H1 (cell line): ENCODE measurements at regions of chr7 and their contacts with region 1.

Region 1: DNA sequence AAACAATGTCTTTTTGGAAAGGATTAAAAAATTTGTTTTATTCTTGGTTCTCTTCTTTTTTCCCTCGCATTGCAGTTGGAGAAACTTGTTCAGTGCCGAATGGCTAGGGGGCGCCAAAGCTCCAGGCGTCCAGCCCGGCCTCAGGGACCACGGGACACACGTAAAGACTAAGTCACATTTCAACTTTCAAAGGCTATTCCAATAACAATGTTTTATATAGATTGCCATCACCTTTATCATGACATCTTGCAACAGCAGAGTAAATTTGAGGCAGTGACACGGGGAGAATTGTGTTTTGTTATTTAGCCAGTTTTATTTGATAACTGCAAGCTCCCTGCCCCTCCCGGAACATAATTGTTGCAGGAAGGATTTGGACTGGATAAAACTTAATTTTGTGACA is 2.2 kb upstream of the IGFBP3 start:
- DNase-seq: peak in 1 of 2 experiments; percentile 88
- H3K4me3 ChIP-seq: peak overlapping the region in 2 of 4 experiments; percentile 17 to 67; a peak in 5 of 8 replicates
- H3K27ac ChIP-seq: no peak overlapping the region
- H3K4me1 ChIP-seq: peaks cover 6 to 26% (median 12%) of the 10 kb centered on the region in 4 experiments; a peak in 6 of 7 replicates
- H3K27me3 ChIP-seq: peaks cover 14 to 41% (median 33%) of the 10 kb centered on the region in 4 experiments
- CTCF ChIP-seq: peak; percentile 74 to 86 (median 85)
- EP300 ChIP-seq: no peak
- POLR2A ChIP-seq: no peak
- RAD21 ChIP-seq: peak; percentile 93 to 94

Region 2: DNA sequence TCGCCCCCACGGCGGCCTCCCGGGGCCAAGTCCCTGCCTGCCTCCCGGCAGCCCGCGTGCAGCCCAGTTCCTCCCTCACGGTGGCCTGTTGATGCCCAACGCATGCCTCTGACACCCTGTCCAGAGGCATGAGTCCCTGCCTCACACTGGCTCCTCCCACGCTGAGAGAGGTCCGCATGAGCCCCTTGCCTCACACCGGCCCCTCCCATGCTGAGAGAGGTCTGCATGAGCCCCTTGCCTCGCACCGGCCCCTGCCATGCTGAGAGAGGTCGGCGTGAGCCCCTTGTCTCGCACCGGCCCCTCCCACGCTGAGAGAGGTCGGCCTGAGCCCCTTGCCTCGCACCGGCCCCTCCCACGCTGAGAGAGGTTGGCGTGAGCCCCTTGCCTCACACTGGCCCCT is 110.3 kb before region 1 on chr7:
- CTCF ChIA-PET with region 1: no interaction called
- POLR2A ChIA-PET with region 1: no interaction called
- DNase-seq: no peak
- H3K4me3 ChIP-seq: no peak overlapping the region
- H3K27ac ChIP-seq: no peak overlapping the region
- H3K4me1 ChIP-seq: no peaks in the 10 kb centered on the region
- H3K27me3 ChIP-seq: no peaks in the 10 kb centered on the region
- CTCF ChIP-seq: no peak
- EP300 ChIP-seq: no peak
- POLR2A ChIP-seq: no peak
- RAD21 ChIP-seq: no peak

Region 3: DNA sequence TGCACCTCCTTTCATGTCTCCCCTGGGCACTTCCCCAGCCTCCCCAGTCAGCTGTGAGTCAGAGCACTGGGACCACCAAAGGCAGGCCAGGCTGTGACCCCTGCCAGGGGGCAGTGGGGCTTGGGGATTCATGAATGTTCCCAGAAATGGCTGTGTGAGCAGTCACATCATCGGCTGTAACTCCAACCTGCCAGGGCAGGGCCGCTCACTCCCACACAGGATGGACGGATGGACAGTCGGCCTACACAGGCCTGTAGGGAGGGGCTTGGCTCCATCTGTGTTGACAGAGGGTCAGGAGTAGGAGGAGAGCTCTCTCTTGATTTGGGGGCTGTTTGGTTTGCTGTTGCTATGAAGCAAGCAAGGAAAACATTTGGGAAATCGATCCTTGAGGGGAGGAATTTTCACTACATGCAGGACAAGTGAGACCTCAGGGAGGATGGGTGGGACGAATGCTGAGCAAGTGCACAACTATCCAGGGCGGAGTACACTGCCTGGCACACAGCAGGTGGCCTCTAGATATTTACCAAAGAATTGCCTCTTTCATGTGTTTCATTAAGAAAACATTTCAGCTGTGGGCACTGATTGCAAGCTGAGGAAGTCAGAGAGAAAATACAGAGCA is 37.9 kb before region 1 on chr7:
- CTCF ChIA-PET with region 1: interaction called, 22 read pairs
- POLR2A ChIA-PET with region 1: interaction called, 5 read pairs
- DNase-seq: no peak
- H3K4me3 ChIP-seq: no peak overlapping the region
- H3K27ac ChIP-seq: no peak overlapping the region
- H3K4me1 ChIP-seq: peaks cover 3 to 15% (median 10%) of the 10 kb centered on the region in 4 experiments
- H3K27me3 ChIP-seq: peaks cover 21 to 36% (median 33%) of the 10 kb centered on the region in 4 experiments
- CTCF ChIP-seq: no peak
- EP300 ChIP-seq: no peak
- POLR2A ChIP-seq: no peak
- RAD21 ChIP-seq: no peak

Region 4: GRCh38 chr7:45978010-45978681 is 54.9 kb after region 1 on chr7:
- CTCF ChIA-PET with region 1: interaction called, 15 read pairs
- POLR2A ChIA-PET with region 1: interaction called, 3 read pairs
- DNase-seq: peak in 1 of 2 experiments; percentile 41
- H3K4me3 ChIP-seq: no peak overlapping the region
- H3K27ac ChIP-seq: no peak overlapping the region
- H3K4me1 ChIP-seq: peaks cover 0 to 7% (median 6%) of the 10 kb centered on the region in 4 experiments; a peak in 5 of 7 replicates
- H3K27me3 ChIP-seq: no peaks in the 10 kb centered on the region
- CTCF ChIP-seq: no peak
- EP300 ChIP-seq: no peak
- POLR2A ChIP-seq: no peak
- RAD21 ChIP-seq: no peak

Region 5: GRCh38 chr7:46139079-46139478 is 215.8 kb after region 1 on chr7:
- CTCF ChIA-PET with region 1: interaction called, 20 read pairs
- POLR2A ChIA-PET with region 1: no interaction called
- DNase-seq: no peak
- H3K4me3 ChIP-seq: no peak overlapping the region
- H3K27ac ChIP-seq: no peak overlapping the region
- H3K4me1 ChIP-seq: no peaks in the 10 kb centered on the region
- H3K27me3 ChIP-seq: no peaks in the 10 kb centered on the region
- CTCF ChIP-seq: no peak
- EP300 ChIP-seq: no peak
- POLR2A ChIP-seq: no peak
- RAD21 ChIP-seq: no peak

Region 6: GRCh38 chr7:46168671-46169383 is 245.5 kb after region 1 on chr7:
- CTCF ChIA-PET with region 1: interaction called, 10 read pairs
- POLR2A ChIA-PET with region 1: no interaction called
- DNase-seq: no peak
- H3K4me3 ChIP-seq: no peak overlapping the region
- H3K27ac ChIP-seq: no peak overlapping the region
- H3K4me1 ChIP-seq: no peaks in the 10 kb centered on the region
- H3K27me3 ChIP-seq: no peaks in the 10 kb centered on the region
- CTCF ChIP-seq: no peak
- EP300 ChIP-seq: no peak
- POLR2A ChIP-seq: no peak
- RAD21 ChIP-seq: no peak

Region 7: DNA sequence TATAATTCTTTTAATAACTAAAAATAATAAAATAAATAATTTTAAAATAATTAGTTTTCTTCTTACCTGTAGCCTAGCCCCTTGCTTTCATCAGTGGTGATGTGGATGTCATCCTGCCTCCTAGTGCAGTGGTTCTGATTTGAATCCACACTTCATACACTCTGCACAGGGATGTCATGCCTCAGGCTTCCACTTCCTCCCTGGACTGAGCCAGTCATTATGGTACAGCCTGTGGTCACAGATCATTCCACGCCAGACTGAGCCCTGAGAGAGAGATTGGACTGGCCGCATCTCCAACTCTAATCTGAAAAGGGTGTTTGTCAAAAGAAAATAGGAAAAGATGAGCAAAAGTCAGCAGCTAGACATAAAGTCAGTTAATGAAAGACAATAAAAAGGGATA is 434.0 kb after region 1 on chr7:
- CTCF ChIA-PET with region 1: interaction called, 242 read pairs
- POLR2A ChIA-PET with region 1: interaction called, 3 read pairs
- DNase-seq: no peak
- H3K4me3 ChIP-seq: no peak overlapping the region
- H3K27ac ChIP-seq: no peak overlapping the region
- H3K4me1 ChIP-seq: peaks cover 0 to 4% (median 0%) of the 10 kb centered on the region in 4 experiments; a peak in 1 of 7 replicates
- H3K27me3 ChIP-seq: peaks cover 0 to 1% (median 0%) of the 10 kb centered on the region in 4 experiments; a peak in 1 of 7 replicates
- CTCF ChIP-seq: no peak
- EP300 ChIP-seq: no peak
- POLR2A ChIP-seq: no peak
- RAD21 ChIP-seq: no peak